ENCODE measurements at regions of chr17 and their contacts with region 1.

Region 1: DNA sequence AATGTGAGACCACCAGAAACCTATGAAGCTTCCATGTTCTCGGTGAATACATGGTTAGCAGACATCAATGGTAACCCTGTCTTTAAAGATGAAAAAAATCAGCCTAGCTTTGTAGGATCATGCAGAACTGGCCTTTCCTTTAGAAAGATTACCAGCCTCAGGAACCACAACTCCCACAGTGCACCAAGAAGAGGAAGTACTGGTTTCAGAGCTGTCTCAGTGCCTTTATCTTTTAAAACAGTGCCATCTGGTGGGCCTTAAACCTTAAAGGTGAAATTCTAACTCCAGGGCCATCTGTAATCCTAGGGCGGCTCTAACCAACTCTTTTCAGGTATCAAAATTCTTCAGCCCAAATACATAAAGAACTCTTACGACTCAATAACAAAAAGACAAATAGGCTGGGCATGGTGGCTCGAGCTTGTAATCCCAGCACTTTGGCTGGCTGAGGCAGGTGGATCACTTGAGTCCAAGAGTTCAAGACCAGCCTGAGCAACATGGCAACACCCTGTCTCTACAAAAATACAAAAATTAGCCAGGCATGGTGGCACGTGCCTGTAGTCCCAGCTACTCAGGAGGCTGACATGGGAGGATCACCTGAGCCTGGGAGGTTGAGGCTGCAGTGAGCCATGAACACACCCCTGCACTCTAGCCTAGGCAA is 5.4 kb downstream of the ATPAF2 start:
- DNase-seq: peak; percentile 80
- H3K4me3 ChIP-seq: no peak overlapping the region; a peak in 1 of 4 replicates
- H3K27ac ChIP-seq: no peak overlapping the region; a peak in 1 of 4 replicates
- H3K4me1 ChIP-seq: peaks cover 0 to 14% of the 10 kb centered on the region in 2 experiments; a peak in 2 of 4 replicates
- H3K27me3 ChIP-seq: no peaks in the 10 kb centered on the region
- CTCF ChIP-seq: peak; percentile 77
- EP300 ChIP-seq: no peak
- RAD21 ChIP-seq: peak; percentile 99

Region 2: GRCh38 chr17:17890773-17891759 is 142.5 kb before region 1 on chr17:
- CTCF ChIA-PET with region 1: interaction called, 18 read pairs
- POLR2A ChIA-PET with region 1: no interaction called
- DNase-seq: peak; percentile 71
- H3K4me3 ChIP-seq: no peak overlapping the region
- H3K27ac ChIP-seq: peak overlapping the region in 1 of 2 experiments; percentile 43; a peak in 1 of 4 replicates
- H3K4me1 ChIP-seq: peaks cover 0 to 31% of the 10 kb centered on the region in 2 experiments; a peak in 1 of 4 replicates
- H3K27me3 ChIP-seq: no peaks in the 10 kb centered on the region
- CTCF ChIP-seq: peak; percentile 79
- EP300 ChIP-seq: no peak
- RAD21 ChIP-seq: peak; percentile 94

Region 3: DNA sequence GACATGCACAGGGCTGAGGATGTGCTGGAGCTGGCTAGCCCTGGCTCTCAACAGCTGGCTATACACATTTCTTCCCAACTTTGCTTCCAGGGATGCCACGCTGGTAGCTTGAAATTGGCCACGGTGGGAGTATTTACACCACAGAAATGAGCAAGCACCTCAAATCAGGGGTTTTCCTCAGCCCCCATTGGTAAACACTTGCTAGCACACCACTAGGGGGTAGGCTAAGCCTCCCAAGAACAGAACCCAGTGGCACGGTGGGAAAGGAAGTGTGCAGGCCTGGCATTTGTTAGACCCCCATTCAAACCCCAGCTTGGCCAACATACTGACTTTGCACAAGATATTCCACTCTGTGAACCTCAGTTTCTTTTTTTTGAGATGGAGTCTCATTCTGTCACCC is 48.0 kb before region 1 on chr17:
- CTCF ChIA-PET with region 1: interaction called, 20 read pairs
- POLR2A ChIA-PET with region 1: no interaction called
- DNase-seq: peak; percentile 54
- H3K4me3 ChIP-seq: no peak overlapping the region
- H3K27ac ChIP-seq: no peak overlapping the region
- H3K4me1 ChIP-seq: peaks cover 2 to 4% of the 10 kb centered on the region in 2 experiments; a peak in 2 of 4 replicates
- H3K27me3 ChIP-seq: no peaks in the 10 kb centered on the region
- CTCF ChIP-seq: peak; percentile 46
- EP300 ChIP-seq: no peak
- RAD21 ChIP-seq: peak; percentile 65

Region 4: GRCh38 chr17:17994271-17995069 is 39.1 kb before region 1 on chr17:
- CTCF ChIA-PET with region 1: interaction called, 40 read pairs
- POLR2A ChIA-PET with region 1: interaction called, 3 read pairs
- DNase-seq: peak; percentile 86
- H3K4me3 ChIP-seq: no peak overlapping the region
- H3K27ac ChIP-seq: peak overlapping the region in 1 of 2 experiments; percentile 62; a peak in 1 of 4 replicates
- H3K4me1 ChIP-seq: peaks cover 4 to 26% of the 10 kb centered on the region in 2 experiments; a peak in 2 of 4 replicates
- H3K27me3 ChIP-seq: no peaks in the 10 kb centered on the region
- CTCF ChIP-seq: peak; percentile 53
- EP300 ChIP-seq: no peak
- RAD21 ChIP-seq: peak; percentile 68

Region 5: GRCh38 chr17:18004884-18005305 is 28.7 kb before region 1 on chr17:
- CTCF ChIA-PET with region 1: interaction called, 10 read pairs
- POLR2A ChIA-PET with region 1: no interaction called
- DNase-seq: no peak
- H3K4me3 ChIP-seq: no peak overlapping the region
- H3K27ac ChIP-seq: no peak overlapping the region
- H3K4me1 ChIP-seq: peaks cover 11 to 30% of the 10 kb centered on the region in 2 experiments; a peak in 3 of 4 replicates
- H3K27me3 ChIP-seq: no peaks in the 10 kb centered on the region
- CTCF ChIP-seq: 0 out of 2 replicates have a peak, but pooled peaks have one; percentile 28
- EP300 ChIP-seq: no peak
- RAD21 ChIP-seq: no peak

Region 6: GRCh38 chr17:18017958-18018357 is 15.6 kb before region 1 on chr17:
- CTCF ChIA-PET with region 1: interaction called, 10 read pairs
- POLR2A ChIA-PET with region 1: no interaction called
- DNase-seq: peak; percentile 57
- H3K4me3 ChIP-seq: no peak overlapping the region
- H3K27ac ChIP-seq: peak overlapping the region in 1 of 2 experiments; percentile 93; a peak in 2 of 4 replicates
- H3K4me1 ChIP-seq: peaks cover 0 to 35% of the 10 kb centered on the region in 2 experiments; a peak in 1 of 4 replicates
- H3K27me3 ChIP-seq: no peaks in the 10 kb centered on the region
- CTCF ChIP-seq: no peak
- EP300 ChIP-seq: no peak
- RAD21 ChIP-seq: no peak

Region 7: DNA sequence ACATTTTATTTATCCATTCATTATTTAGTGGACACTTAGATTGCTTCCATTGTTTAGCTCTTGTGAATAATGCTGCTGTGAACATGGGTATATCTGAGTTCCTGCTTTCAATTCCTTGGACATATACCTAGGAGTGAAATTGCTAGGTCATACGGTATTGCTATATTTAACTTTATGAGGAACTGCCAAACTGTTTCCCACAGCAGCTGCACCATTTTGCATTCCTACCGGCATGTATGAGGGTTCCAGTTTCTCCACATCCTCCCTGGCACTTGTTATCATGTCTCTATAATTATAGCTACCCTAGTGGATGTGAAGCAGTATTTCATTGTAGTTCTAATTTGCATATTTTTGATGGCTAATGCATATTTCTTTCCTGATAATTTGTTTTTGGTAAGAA is 30.5 kb after region 1 on chr17:
- CTCF ChIA-PET with region 1: no interaction called
- POLR2A ChIA-PET with region 1: no interaction called
- DNase-seq: no peak
- H3K4me3 ChIP-seq: no peak overlapping the region
- H3K27ac ChIP-seq: no peak overlapping the region
- H3K4me1 ChIP-seq: no peaks in the 10 kb centered on the region
- H3K27me3 ChIP-seq: no peaks in the 10 kb centered on the region
- CTCF ChIP-seq: no peak
- EP300 ChIP-seq: no peak
- RAD21 ChIP-seq: no peak

Measured in SK-N-SH (cell line).